Heart right ventricle (tissue), 16 donors: ENCODE measurements at regions of chr2 and their contacts with region 1.

Region 1: DNA sequence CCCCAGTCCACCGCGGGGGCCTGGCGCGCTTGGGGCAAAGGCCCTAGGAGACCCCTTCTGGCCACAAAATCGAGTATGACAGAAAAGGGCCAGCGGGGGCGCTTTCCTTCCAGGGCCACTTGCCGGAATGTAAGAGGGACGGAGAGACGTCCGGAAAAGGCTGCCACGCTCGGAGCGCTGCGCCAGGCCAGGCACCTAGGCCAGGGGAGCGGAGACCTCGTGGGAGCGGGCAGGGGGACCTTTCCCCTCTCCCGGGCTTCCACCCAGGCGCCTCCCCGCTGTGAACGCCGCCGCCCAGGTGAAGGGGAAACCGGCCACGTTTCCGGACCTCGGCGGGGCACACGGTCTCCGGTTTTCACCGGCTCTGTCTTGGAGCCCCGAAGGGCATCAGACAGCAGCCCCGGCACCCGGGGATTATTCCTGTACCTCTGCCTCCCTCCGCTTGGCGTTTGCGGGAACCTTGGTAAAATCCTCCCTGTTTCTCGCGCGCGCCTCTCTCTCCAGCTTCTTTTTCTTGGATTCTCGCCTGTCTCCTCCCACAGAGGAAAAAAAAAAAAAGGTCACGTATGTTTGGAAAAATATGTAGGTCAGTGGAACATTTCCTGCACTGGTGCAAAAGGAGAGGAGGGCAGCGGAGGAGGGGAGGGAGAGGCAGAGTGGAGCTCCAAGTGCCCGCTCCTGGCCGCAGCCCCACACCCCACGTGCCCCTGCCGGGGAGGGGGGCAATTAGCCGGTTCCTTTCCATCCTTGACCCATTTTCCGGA is 1.2 kb upstream of the NPAS2 start:
- DNase-seq: peak; percentile 67 to 69
- ATAC-seq: peak; percentile 67 to 87 (median 74)
- H3K4me3 ChIP-seq: peak overlapping the region; percentile 65 to 91 (median 80)
- H3K27ac ChIP-seq: peak overlapping the region; percentile 84 to 98 (median 92)
- H3K4me1 ChIP-seq: peaks cover 7 to 76% (median 38%) of the 10 kb centered on the region in 9 donors
- H3K27me3 ChIP-seq: peaks cover 0 to 63% (median 0%) of the 10 kb centered on the region in 7 donors
- CTCF ChIP-seq: peak in 6 of 9 donors; percentile 17 to 46 (median 34)

Region 2: DNA sequence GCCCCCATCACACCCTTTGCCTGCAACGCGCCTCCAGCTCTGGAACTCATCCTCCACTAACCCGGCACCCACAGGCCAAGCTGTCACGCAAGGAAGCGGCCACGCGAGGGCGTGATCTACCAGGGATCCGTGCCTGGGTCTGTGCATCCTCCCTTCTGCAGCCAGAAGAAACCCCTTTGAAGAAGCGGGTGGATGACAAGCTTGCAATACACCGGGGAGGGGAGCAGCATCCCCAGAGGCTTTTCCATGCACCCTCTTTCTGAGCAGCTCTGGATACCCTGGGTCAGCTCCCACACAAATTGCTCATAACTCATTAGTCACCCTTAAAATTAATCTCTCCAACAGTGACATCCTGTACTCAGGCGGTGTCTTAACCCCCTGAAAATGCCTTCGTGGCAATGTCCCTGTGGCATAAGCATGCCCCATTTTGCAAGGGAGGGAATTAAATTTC is 208.4 kb before region 1 on chr2:
- intact Hi-C with region 1: loop called in 1 of 10 experiments (anchors 10 kb)
- DNase-seq: peak; percentile 59 to 66
- ATAC-seq: peak; percentile 61 to 85 (median 74)
- H3K4me3 ChIP-seq: no peak overlapping the region
- H3K27ac ChIP-seq: no peak overlapping the region
- H3K4me1 ChIP-seq: no peaks in the 10 kb centered on the region
- H3K27me3 ChIP-seq: no peaks in the 10 kb centered on the region
- CTCF ChIP-seq: peak; percentile 34 to 74 (median 65)

Region 3: GRCh38 chr2:100742277-100743254 is 76.2 kb before region 1 on chr2:
- intact Hi-C with region 1: loop called in 1 of 10 experiments (anchors 5 kb)
- DNase-seq: peak in 1 of 2 donors; percentile 35
- ATAC-seq: peak; percentile 76 to 85 (median 84)
- H3K4me3 ChIP-seq: no peak overlapping the region
- H3K27ac ChIP-seq: peak overlapping the region in 6 of 10 donors; percentile 26 to 75 (median 54)
- H3K4me1 ChIP-seq: peaks cover 0 to 12% (median 0%) of the 10 kb centered on the region in 9 donors
- H3K27me3 ChIP-seq: no peaks in the 10 kb centered on the region
- CTCF ChIP-seq: no peak

Region 4: GRCh38 chr2:100870652-100871531 is 52.1 kb after region 1 on chr2:
- intact Hi-C with region 1: loop called in 2 of 10 experiments (anchors 5 to 10 kb)
- DNase-seq: no peak
- ATAC-seq: peak in 1 of 8 donors; percentile 28
- H3K4me3 ChIP-seq: no peak overlapping the region
- H3K27ac ChIP-seq: no peak overlapping the region
- H3K4me1 ChIP-seq: peaks cover 0 to 7% (median 4%) of the 10 kb centered on the region in 9 donors
- H3K27me3 ChIP-seq: no peaks in the 10 kb centered on the region
- CTCF ChIP-seq: peak in 3 of 9 donors; percentile 15 to 29 (median 18)

Region 5: DNA sequence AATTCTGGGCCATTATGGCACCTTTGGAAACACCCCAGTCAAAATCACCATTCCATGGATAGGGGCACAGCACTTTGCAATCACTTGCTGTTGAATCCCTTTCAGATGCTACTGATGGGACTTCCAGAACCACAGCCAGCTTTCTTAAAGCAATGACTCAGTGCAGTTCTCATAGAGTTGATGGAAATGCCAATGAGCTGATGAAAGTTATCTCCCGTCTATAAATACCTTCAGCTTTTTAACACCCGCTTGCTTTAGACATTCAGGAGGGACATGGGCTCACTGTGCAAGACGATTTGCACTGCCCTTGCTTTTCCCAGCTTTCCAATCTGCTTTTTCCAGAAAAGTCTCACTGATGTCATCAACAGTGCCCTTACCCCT is 116.6 kb after region 1 on chr2:
- intact Hi-C with region 1: loop called in 2 of 10 experiments (anchors 5 to 10 kb)
- DNase-seq: no peak
- ATAC-seq: peak; percentile 53 to 90 (median 80)
- H3K4me3 ChIP-seq: no peak overlapping the region
- H3K27ac ChIP-seq: peak overlapping the region; percentile 58 to 88 (median 74)
- H3K4me1 ChIP-seq: peaks cover 0 to 36% (median 26%) of the 10 kb centered on the region in 9 donors
- H3K27me3 ChIP-seq: no peaks in the 10 kb centered on the region
- CTCF ChIP-seq: no peak

Region 6: DNA sequence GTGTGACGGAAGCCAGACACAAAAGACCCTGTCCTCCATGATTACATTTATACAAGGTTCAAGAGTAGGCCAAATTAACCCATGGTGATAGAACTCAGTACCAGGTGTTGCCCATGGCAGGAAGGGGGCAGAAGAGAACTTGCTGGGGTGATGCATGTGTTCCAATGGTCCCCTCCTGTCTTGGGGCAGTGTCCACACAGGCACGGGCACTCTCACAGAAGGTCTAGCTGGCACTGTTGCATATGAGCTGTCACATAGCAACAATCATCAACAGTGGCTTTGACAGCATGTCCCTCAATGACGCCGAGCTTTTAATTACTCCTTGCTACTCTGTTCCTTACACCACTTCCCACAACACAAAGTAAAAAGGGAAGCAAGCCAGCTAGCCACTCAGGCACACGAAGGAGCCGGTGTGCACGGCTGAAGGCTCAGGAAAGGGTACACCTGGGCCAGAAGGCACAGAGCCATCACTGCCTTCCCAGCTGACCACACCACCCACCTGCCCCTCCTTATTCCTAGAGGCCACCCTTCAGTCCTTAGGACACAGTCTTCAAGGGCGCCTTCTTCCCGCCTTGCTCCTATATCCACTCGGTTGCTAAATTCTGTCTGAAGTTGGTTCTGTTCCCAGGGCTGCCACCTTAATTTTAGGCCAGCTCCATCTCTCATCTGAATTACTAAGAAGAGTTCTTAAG is 212.2 kb after region 1 on chr2:
- intact Hi-C with region 1: no loop called
- DNase-seq: peak in 1 of 2 donors; percentile 38
- ATAC-seq: peak; percentile 56 to 95 (median 84)
- H3K4me3 ChIP-seq: no peak overlapping the region
- H3K27ac ChIP-seq: peak overlapping the region in 5 of 10 donors; percentile 9 to 51 (median 37)
- H3K4me1 ChIP-seq: peaks cover 0 to 15% (median 0%) of the 10 kb centered on the region in 9 donors
- H3K27me3 ChIP-seq: no peaks in the 10 kb centered on the region
- CTCF ChIP-seq: peak in 4 of 9 donors; percentile 7 to 38 (median 28)

Region 7: DNA sequence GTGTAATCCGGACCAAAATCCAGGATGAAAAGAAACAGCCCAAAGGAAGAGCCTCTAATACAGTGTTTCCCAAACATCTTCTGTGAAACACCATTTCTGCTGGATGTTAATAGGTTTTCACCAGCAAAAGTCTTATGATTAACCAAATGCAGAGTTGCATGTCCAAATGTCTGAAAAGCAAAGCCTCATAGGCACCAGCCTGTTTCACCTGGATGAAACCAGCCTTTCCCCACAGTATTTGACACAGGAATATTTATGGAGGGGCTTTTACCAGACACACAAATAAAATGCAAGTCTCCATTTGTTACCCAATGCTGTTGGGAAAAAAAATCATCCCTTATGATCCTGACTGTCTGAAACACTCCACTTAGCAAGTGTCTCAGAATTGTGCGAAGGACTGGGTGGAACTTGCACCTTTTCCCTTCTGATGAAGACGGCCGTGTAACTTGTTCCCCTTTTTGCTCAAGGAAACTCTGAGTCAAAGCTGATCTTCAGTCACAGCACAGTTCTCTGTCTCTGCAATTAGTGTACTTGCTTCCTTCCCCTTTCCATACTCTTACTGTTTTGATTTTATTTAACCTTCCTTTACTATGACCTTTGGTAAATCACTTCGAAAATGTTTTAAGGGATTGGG is 1102.6 kb after region 1 on chr2:
- intact Hi-C with region 1: no loop called
- DNase-seq: no peak
- ATAC-seq: peak in 5 of 8 donors; percentile 30 to 76 (median 55)
- H3K4me3 ChIP-seq: no peak overlapping the region
- H3K27ac ChIP-seq: peak overlapping the region in 3 of 10 donors; percentile 23 to 86 (median 41)
- H3K4me1 ChIP-seq: peaks cover 0 to 8% (median 0%) of the 10 kb centered on the region in 9 donors
- H3K27me3 ChIP-seq: no peaks in the 10 kb centered on the region
- CTCF ChIP-seq: no peak